ENCODE measurements at regions of chr7 and their contacts with region 1.

Region 1: DNA sequence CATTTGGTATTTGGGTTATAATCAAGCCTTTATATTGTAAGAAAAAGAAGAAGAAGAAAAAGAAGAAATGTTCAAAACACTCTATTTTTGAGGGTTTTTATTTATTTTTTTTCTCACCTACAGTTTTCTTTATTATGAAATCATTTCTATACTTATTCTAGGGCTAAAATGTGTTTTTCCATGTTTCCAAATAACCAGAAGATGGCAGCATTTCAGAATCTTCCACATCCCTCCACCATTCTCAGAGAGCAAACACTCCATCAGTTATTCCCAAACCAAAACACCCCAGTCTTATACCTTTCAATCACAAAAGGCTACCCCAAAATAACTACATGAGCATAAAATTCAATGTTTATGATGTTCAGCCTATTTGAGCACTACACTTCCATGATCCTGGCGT is 38.7 kb upstream of the PPP1R17 start:
- DNase-seq: peak in 5 of 42 donors; percentile 3 to 42 (median 6)

Region 2: DNA sequence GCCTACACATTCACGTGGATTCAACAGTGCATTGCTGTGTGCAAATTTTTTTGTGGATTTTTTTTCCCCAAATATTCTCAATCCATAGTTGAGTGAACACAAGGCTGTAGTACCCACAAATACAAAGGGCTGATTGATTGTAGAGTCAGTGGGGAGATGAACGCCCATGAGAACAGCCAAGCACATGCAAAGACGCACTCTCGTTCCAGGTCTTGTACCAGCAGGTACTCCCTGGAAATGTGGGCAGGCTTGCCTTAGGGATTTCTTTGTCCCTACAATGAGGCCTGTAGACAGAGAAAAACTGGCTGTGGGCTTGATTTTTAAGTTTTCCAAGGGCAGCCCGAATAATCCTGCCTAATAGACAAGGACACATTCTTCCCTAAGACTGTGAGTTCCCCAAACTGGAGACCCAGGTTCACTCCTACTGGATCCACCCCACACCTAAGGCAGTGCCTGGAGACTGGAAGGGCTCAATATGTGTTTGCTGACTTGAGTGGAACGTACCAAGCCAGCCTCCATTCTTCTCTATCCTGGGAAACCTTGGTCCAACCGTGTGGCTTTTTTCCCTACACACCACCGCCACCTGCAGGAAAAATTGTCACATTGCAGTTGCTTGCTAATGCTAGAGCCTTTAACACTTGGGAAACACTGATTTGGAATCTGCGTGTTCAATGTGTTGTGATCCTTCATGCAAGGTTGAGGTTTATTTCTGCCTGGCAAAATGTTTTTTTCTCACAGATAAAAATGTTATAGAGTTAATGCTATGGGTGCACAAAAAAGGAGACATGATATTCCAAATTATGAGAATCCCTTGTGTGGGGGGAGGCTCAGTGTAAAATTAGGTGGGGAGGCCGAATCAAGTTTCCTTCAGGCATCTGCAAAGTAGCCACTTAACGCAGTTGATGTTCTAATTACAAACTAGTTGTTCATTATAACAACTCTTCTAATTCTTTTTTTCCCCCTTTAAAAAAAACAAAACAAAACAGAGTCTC is 88.0 kb after region 1 on chr7:
- intact Hi-C with region 1: loop called (anchors 2 kb)
- DNase-seq: peak; percentile 37 to 92 (median 81)

Region 3: DNA sequence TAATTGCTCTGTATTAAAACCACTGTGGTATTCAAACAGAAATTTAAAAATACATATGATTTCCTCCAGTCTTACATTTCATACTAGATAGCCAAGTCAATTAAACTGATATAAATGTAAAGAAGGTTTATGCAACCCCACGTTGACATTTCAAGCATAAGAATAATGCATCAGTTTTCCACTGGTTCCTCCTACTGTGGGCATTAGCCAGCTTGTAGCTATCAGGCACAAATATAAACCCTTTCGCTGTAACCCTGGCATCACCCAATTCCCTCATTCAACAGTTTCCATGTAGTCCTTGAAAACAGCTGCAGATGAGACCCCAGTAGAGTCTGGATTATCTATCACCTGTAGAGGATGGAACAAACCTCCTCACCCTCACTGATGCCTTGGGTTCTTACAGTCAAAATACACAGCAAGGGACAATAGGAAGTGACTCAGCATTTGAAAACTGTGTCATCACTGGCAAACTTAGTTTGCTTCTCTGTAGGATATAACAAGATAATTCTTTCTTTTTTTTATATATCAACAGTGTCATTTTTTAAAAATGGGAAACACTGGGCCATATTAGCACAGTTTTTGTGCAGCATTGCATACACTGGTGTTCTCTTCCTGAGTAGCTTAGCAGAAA is 308.9 kb after region 1 on chr7:
- intact Hi-C with region 1: no loop called
- DNase-seq: no peak

Measured in head of caudate nucleus (tissue), 42 donors.